ENCODE measurements at regions of chr7 and their contacts with region 1.

Region 1: GRCh38 chr7:39732837-39733804 is 109.7 kb downstream of the RALA start:
- DNase-seq: peak; percentile 93 to 98 (median 96)
- H3K4me3 ChIP-seq: peak overlapping the region; percentile 54 to 89 (median 73)
- H3K27ac ChIP-seq: peak overlapping the region in 58 of 59 donors; percentile 19 to 90 (median 74)
- H3K27me3 ChIP-seq: no peaks in the 10 kb centered on the region
- CTCF ChIP-seq: peak in 14 of 56 donors; percentile 6 to 52 (median 19)

Region 2: DNA sequence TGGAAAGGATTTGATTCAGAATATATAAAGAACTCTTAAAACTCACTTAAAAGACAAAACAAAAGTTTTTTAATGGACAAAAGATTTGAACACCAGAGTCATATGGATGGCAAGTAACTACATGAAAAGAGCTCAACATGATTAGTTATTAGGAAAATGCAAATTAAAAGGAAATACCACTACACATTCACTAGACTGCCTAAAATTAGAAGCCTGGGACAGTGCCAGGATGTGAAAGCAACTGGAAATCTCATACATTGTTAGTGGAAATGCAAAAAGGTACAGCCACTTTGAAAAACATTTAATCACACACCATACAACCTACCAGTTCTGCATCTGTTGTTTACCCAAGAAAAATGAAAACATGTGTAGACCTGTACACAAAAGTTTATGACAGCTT is 60.9 kb before region 1 on chr7:
- intact Hi-C with region 1: loop called in 1 of 2 experiments (anchors 10 kb)
- DNase-seq: no peak
- H3K4me3 ChIP-seq: no peak overlapping the region
- H3K27ac ChIP-seq: no peak overlapping the region
- H3K27me3 ChIP-seq: no peaks in the 10 kb centered on the region
- CTCF ChIP-seq: no peak

Region 3: GRCh38 chr7:39808796-39809481 is 75.8 kb after region 1 on chr7:
- intact Hi-C with region 1: no loop called
- DNase-seq: no peak
- H3K4me3 ChIP-seq: no peak overlapping the region
- H3K27ac ChIP-seq: no peak overlapping the region
- H3K27me3 ChIP-seq: peaks cover 0 to 4% (median 0%) of the 10 kb centered on the region in 45 donors
- CTCF ChIP-seq: no peak

Measured in dorsolateral prefrontal cortex (tissue), 120 donors.